GM10248 (cell line): ENCODE measurements at regions of chr1 and their contacts with region 1.

Region 1: GRCh38 chr1:6438047-6438525 is 13.5 kb downstream of the ESPN start:
- DNase-seq: peak; percentile 89
- CTCF ChIP-seq: peak; percentile 97

Region 2: DNA sequence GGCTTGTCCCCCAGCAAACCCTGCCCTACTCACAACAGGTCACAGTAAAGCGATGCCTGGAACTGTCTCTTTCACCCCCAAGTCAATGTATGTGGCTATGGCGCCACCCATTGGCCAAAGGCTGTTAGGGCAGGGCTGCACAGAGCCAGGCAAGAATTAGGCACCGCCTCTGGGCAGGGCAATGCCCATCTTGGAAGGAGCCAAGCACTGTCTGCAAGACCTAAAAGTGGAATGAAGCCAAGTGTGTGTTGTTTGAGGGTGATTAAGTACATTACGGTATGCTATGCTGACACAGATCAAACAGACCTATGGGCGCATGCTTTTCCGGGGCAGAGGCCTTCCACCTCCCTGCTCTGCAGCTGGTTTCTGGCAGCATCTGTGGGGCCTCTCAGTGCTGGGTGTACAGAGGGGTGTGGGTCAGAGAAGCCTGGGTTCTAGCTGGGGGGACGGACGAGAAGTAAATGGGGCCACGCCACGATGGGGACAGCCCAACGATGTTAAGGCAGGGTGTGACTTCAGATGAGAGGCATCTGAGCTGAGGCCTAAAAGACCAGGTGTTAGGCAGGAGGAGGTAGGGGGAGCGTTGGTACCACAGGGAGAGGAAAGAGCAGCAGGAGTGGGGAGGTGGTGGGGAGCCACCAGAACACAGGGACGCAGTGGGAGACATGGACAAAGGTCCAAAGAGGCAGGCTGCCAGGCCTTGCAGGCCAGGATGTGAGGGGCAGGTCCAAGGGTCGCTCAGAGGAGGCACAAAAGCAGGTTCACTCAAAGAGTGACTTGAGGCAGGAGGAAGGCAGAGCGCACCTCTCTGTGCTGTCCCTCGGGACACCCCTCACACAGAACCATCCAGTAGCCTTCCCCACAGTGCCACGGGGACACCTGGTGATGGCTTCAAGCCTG is 94.3 kb before region 1 on chr1:
- CTCF ChIA-PET with region 1: interaction called, 26 read pairs
- POLR2A ChIA-PET with region 1: no interaction called
- DNase-seq: peak; percentile 80
- CTCF ChIP-seq: peak; percentile 93

Region 3: GRCh38 chr1:6359216-6360116 is 78.6 kb before region 1 on chr1:
- CTCF ChIA-PET with region 1: interaction called, 33 read pairs
- POLR2A ChIA-PET with region 1: no interaction called
- DNase-seq: peak; percentile 82
- CTCF ChIP-seq: no peak

Region 4: GRCh38 chr1:6385488-6386191 is 52.4 kb before region 1 on chr1:
- CTCF ChIA-PET with region 1: interaction called, 14 read pairs
- POLR2A ChIA-PET with region 1: no interaction called
- DNase-seq: no peak
- CTCF ChIP-seq: no peak

Region 5: GRCh38 chr1:6423321-6423999 is 14.6 kb before region 1 on chr1:
- CTCF ChIA-PET with region 1: interaction called, 94 read pairs
- POLR2A ChIA-PET with region 1: no interaction called
- DNase-seq: peak; percentile 83
- CTCF ChIP-seq: peak; percentile 89

Region 6: GRCh38 chr1:6448749-6449631 is 10.9 kb after region 1 on chr1:
- CTCF ChIA-PET with region 1: interaction called, 32 read pairs
- POLR2A ChIA-PET with region 1: no interaction called
- DNase-seq: no peak
- CTCF ChIP-seq: no peak